Activated T-helper 1 cell treated with anti-CD3 and anti-CD28 coated beads, Interleukin-12 subunit alpha, Interleukin-12 subunit beta, Interleukin-2, Interleukin-4 antibody, amounts not matched to agents 30 ng/mL and 10 ng/mL and 1 ng/mL, durations not matched to agents 14 hours and 24 hours and 36 hours (primary cell): ENCODE measurements at regions of chr1 and their contacts with region 1.

Region 1: GRCh38 chr1:232950197-232951176 is at the start of gene NTPCR:
- DNase-seq: peak; percentile 94
- H3K4me3 Mint-ChIP-seq: peak within 1 kb of the TSS; percentile 95
- H3K27ac Mint-ChIP-seq: peak within 1 kb of the TSS; percentile 93
- H3K4me1 Mint-ChIP-seq: peaks cover 43% of the 10 kb centered on the region
- H3K27me3 Mint-ChIP-seq: no peaks in the 10 kb centered on the region
- total RNA-seq, gene NTPCR: 24.5 and 26.8 TPM in 2 replicates

Region 2: DNA sequence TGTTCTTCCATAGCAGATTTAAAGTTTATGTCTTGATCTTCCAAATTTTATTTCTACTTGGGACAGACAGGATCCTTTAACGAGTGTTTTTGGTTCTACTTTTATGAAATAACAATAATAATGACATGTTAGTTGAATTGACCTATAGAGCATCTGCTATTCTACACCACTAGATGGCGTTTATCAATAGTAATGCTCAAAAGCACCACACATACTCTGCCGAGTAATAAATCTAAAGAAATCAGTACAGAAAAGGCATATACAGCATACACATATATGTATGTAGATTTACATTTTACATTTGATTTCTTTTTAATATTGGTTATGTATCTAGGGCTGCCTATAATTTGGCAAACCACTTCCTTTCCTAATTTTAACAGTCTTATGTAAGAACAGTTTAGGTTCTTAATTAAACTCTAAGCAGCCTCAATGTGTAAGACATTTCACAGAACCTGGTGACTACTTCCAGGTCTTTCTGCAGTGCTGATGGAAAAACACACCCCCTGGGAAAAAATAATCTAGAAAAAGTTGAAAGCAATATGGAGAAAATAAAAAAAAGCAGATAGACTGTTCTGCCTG is 314.6 kb before region 1 on chr1:
- intact Hi-C with region 1: loop called (anchors 1 kb)
- DNase-seq: no peak
- H3K4me3 Mint-ChIP-seq: no peak overlapping the region
- H3K27ac Mint-ChIP-seq: no peak overlapping the region
- H3K4me1 Mint-ChIP-seq: peaks cover 4% of the 10 kb centered on the region
- H3K27me3 Mint-ChIP-seq: peaks cover 29% of the 10 kb centered on the region

Region 3: GRCh38 chr1:232805269-232806185 is 145.0 kb before region 1 on chr1 and contains the start of gene MAP10:
- intact Hi-C with region 1: loop called (anchors 1 kb)
- DNase-seq: peak; percentile 74
- H3K4me3 Mint-ChIP-seq: peak within 1 kb of the TSS; percentile 89
- H3K27ac Mint-ChIP-seq: peak within 1 kb of the TSS; percentile 88
- H3K4me1 Mint-ChIP-seq: peaks cover 31% of the 10 kb centered on the region
- H3K27me3 Mint-ChIP-seq: peaks cover 9% of the 10 kb centered on the region
- total RNA-seq, gene MAP10: 3.3 and 3.4 TPM in 2 replicates

Region 4: GRCh38 chr1:232923739-232924386 is 26.6 kb before region 1 on chr1:
- intact Hi-C with region 1: loop called (anchors 1 kb)
- DNase-seq: peak; percentile 59
- H3K4me3 Mint-ChIP-seq: peak overlapping the region; percentile 46
- H3K27ac Mint-ChIP-seq: peak overlapping the region; percentile 93
- H3K4me1 Mint-ChIP-seq: peaks cover 37% of the 10 kb centered on the region
- H3K27me3 Mint-ChIP-seq: no peaks in the 10 kb centered on the region

Region 5: DNA sequence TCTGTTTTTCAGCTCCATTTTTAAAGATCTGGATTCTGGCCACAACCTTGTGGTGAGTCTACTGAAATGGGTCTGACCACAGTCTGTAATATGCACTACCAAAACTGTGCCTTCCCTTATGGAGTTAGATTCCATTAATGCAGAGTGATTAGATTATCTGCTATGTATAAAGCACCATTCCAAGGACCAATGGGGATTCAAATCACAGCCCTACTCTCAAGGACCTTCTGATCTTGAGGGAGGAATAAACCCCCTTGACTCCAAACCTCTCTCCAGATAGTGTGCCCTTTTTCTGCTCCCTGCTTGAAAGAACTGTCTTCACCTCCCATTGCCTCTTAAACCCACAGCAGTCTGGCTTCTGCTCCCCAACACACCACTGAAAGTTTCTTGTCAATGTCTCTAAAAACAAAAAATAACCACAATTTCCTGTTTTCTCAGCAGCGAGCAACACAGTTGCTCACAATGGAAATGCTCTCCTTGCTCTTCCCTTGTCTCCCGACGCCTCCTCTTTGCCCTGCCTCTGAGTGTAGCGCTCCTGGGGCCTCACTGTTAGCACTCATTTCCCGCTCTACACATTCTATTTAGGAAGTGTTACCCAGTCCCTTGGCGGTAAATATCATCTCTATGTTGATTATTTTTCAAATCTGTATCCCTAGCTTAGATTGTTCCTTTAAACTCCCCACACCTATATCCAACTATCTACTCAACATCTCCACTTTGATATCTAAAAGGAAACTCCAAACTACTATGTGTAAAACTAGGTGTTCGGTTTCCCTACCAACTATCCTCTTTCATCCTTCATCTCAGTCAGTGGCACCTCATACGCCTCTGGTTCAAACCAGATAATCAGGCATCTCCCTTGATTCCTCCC is 331.5 kb after region 1 on chr1:
- intact Hi-C with region 1: loop called (anchors 5 kb)
- DNase-seq: peak; percentile 31
- H3K4me3 Mint-ChIP-seq: peak overlapping the region; percentile 72
- H3K27ac Mint-ChIP-seq: peak overlapping the region; percentile 91
- H3K4me1 Mint-ChIP-seq: peaks cover 67% of the 10 kb centered on the region
- H3K27me3 Mint-ChIP-seq: no peaks in the 10 kb centered on the region